Activated CD8-positive, alpha-beta T cell treated with anti-CD3 and anti-CD28 coated beads for 36 hours (primary cell): ENCODE measurements at regions of chr5 and their contacts with region 1.

Region 1: DNA sequence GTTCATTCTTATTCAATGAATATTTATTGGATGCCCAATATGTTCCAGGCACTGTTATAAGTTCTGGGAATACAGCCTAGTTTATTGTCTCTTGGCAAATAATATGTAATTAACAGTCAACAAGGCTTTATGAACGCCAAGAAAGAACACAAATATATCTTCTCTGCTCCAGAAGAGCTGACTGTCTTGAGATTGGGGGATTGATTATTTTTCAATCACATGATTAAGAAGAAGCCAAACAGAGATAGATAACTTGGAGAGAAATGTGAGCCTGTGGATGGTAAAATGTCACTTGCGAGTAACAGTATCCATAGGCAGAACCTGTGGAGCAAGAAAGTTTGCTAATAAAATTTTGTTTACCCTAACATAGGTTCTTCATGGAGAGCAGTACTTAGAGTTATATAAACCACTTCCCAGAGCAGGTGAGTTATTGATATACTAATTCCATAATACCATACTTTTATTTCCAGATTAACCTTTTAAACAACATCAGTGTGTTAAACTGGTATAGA is 49.4 kb downstream of the HSD17B4 start:
- DNase-seq: no peak
- ATAC-seq: no peak
- H3K4me3 Mint-ChIP-seq: no peak overlapping the region
- H3K27ac Mint-ChIP-seq: no peak overlapping the region
- H3K4me1 Mint-ChIP-seq: no peaks in the 10 kb centered on the region
- H3K27me3 Mint-ChIP-seq: no peaks in the 10 kb centered on the region
- CTCF ChIP-seq: no peak

Region 2: GRCh38 chr5:119470851-119471451 is 30.8 kb before region 1 on chr5:
- CTCF ChIA-PET with region 1: interaction called, 11 read pairs
- POLR2A ChIA-PET with region 1: no interaction called
- intact Hi-C with region 1: no loop called
- DNase-seq: peak; percentile 26
- ATAC-seq: no peak
- H3K4me3 Mint-ChIP-seq: no peak overlapping the region
- H3K27ac Mint-ChIP-seq: no peak overlapping the region
- H3K4me1 Mint-ChIP-seq: peaks cover 19% of the 10 kb centered on the region
- H3K27me3 Mint-ChIP-seq: no peaks in the 10 kb centered on the region
- CTCF ChIP-seq: peak; percentile 58